PC-3 (cell line): ENCODE measurements at regions of chr13 and their contacts with region 1.

Region 1: DNA sequence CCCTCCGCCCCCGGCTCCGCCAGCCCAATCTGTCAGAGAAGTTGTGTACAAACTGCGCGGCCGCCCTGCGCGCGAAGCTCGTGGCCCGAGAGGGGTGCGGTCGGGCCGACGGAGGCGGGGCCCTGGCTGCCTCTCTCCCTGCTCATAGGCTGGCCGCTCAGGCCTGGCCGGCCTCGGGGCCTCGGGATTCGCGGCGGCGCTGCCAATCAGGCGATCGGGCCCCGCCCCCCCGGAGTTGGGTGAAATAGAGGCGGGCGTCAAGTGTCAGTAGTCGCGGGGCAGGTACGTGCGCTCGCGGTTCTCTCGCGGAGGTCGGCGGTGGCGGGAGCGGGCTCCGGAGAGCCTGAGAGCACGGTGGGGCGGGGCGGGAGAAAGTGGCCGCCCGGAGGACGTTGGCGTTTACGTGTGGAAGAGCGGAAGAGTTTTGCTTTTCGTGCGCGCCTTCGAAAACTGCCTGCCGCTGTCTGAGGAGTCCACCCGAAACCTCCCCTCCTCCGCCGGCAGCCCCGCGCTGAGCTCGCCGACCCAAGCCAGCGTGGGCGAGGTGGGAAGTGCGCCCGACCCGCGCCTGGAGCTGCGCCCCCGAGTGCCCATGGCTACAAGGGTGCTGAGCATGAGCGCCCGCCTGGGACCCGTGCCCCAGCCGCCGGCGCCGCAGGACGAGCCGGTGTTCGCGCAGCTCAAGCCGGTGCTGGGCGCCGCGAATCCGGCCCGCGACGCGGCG is at the start of gene KLF5:
- DNase-seq: peak; percentile 96
- ATAC-seq: peak; percentile 84
- H3K4me3 ChIP-seq: peak within 1 kb of the TSS; percentile 97
- H3K27ac ChIP-seq: peak within 1 kb of the TSS; percentile 79
- H3K4me1 ChIP-seq: peaks cover 47% of the 10 kb centered on the region
- H3K27me3 ChIP-seq: no peaks in the 10 kb centered on the region
- CTCF ChIP-seq: no peak
- total RNA-seq, gene KLF5: 51.4 and 53.7 TPM in 2 replicates

Region 2: DNA sequence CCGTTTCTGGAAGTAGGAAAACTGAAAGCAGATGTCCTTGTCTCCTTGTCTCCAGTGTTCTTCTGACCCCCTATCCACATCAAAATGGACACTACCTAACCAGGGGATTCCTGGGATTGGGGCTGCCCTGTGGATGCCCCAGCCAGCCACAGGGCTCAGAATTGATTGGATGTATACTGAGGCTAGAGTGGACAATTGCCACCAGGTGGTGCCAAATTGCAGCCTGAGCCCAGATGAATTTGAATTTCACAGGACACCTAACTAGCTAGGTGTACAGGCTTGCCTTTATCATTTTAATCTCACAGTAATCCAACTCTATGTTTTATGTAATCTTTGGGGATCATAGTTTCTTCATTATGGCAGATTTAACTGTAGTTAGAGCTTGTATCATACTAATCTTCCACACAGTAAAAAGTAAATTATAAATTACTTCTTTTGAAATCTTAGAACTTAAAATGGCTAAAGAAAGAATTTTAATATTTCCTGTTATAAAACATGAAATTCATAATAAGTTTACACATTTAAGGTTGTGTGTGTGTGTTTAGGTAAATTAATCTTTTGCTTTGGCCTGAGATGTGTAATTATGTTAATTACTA is 219.0 kb before region 1 on chr13:
- CTCF ChIA-PET with region 1: interaction called, 3 read pairs
- POLR2A ChIA-PET with region 1: no interaction called
- intact Hi-C with region 1: loop called (anchors 2 kb)
- DNase-seq: peak; percentile 74
- ATAC-seq: peak; percentile 92
- H3K4me3 ChIP-seq: no peak overlapping the region
- H3K27ac ChIP-seq: no peak overlapping the region
- H3K4me1 ChIP-seq: no peaks in the 10 kb centered on the region
- H3K27me3 ChIP-seq: no peaks in the 10 kb centered on the region
- CTCF ChIP-seq: peak; percentile 84

Region 3: DNA sequence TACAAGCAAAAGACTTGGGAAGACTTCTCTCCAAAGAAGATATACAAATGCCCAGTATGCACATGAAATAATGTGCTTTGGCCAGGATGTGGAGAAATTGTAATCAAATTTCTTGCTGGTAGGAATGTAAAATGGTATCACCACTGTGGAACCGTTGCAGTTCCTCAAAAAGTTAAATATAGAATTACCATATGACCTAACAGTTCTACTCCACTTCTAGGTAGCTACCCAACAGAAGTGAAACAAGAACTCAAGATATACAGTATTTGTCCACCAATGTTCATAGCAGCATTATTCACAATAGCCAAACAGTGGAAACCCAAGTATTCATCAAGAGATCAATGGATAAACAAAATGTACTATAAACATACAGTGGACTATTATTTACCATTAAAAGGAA is 95.1 kb before region 1 on chr13:
- CTCF ChIA-PET with region 1: no interaction called
- POLR2A ChIA-PET with region 1: no interaction called
- intact Hi-C with region 1: loop called (anchors 5 kb)
- DNase-seq: no peak
- ATAC-seq: no peak
- H3K4me3 ChIP-seq: no peak overlapping the region
- H3K27ac ChIP-seq: no peak overlapping the region
- H3K4me1 ChIP-seq: peaks cover 21% of the 10 kb centered on the region
- H3K27me3 ChIP-seq: no peaks in the 10 kb centered on the region
- CTCF ChIP-seq: no peak

Region 4: GRCh38 chr13:72983085-72983768 is 75.7 kb before region 1 on chr13:
- CTCF ChIA-PET with region 1: no interaction called
- POLR2A ChIA-PET with region 1: interaction called, 20 read pairs
- intact Hi-C with region 1: no loop called
- DNase-seq: no peak
- ATAC-seq: no peak
- H3K4me3 ChIP-seq: no peak overlapping the region
- H3K27ac ChIP-seq: no peak overlapping the region
- H3K4me1 ChIP-seq: peaks cover 5% of the 10 kb centered on the region; the same call in 1 of the 2 replicates
- H3K27me3 ChIP-seq: no peaks in the 10 kb centered on the region
- CTCF ChIP-seq: no peak

Region 5: DNA sequence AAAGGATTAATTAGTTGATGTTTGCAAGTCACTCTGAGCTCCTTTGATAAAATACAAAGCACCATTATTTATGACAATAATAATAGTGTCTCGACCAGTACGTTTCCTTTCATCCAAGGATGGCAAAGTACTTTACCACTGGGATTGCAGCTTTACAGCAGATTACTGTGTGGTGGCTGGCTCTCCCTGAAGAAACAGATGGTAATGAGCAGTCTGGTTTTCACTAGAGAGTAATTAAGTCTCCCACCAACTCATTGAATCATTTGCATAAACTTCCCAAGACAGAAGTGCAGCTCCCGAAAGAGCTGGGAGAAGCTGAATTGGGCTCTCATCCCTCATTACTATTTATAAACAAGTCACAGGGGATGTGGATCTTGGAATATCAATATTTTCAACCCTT is 48.6 kb after region 1 on chr13:
- CTCF ChIA-PET with region 1: no interaction called
- POLR2A ChIA-PET with region 1: no interaction called
- intact Hi-C with region 1: no loop called
- DNase-seq: no peak
- ATAC-seq: no peak
- H3K4me3 ChIP-seq: no peak overlapping the region
- H3K27ac ChIP-seq: no peak overlapping the region
- H3K4me1 ChIP-seq: no peaks in the 10 kb centered on the region
- H3K27me3 ChIP-seq: no peaks in the 10 kb centered on the region
- CTCF ChIP-seq: no peak

Region 6: GRCh38 chr13:73133547-73133946 is 74.6 kb after region 1 on chr13:
- CTCF ChIA-PET with region 1: no interaction called
- POLR2A ChIA-PET with region 1: interaction called, 20 read pairs
- intact Hi-C with region 1: loop called (anchors 2 kb)
- DNase-seq: peak; percentile 94
- ATAC-seq: peak; percentile 77
- H3K4me3 ChIP-seq: no peak overlapping the region
- H3K27ac ChIP-seq: peak overlapping the region; percentile 86
- H3K4me1 ChIP-seq: peaks cover 24% of the 10 kb centered on the region
- H3K27me3 ChIP-seq: no peaks in the 10 kb centered on the region
- CTCF ChIP-seq: no peak

Region 7: DNA sequence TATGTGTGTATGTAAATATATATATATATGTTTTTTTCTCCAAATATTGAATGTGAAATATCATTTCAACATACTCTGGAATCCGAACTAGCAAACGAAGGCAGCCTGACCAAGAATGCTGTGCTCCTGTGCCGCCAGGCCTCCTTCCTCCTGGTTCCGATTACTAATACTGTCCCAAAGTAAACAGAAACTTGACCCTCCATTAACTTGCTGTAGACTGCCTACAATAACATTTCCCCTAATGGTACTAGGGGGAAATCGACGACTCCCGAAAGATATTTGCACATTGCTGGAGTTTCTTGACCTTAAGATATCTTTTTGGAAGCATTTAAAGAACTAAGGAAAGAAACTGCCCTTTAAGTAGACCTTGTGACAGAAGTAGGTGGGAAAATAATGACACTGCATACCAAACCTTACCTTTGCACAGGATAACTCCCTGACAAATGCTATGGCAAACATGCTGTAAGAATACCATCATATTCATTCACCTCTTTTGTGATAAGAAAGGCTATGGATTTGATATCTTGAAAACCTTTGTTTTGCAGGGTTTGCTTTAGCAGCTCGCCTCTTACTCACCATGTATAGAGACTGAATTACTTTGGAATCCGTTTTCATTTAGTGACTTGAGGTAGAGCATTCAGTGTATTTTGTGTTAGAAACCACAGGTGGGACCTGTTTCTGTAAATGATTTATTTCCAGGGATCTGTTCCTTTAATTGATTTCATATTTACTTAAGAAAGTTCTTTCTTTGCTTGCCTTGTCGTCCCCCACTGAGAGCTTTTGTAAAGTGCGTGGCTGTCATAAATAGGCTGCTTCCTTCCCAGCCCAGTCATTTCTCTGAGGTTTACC is 80.0 kb after region 1 on chr13:
- CTCF ChIA-PET with region 1: no interaction called
- POLR2A ChIA-PET with region 1: interaction called, 4 read pairs
- intact Hi-C with region 1: loop called (anchors 2 kb)
- DNase-seq: peak; percentile 83
- ATAC-seq: peak; percentile 90
- H3K4me3 ChIP-seq: peak overlapping the region; percentile 47; the same call in 1 of the 2 replicates
- H3K27ac ChIP-seq: peak overlapping the region; percentile 94
- H3K4me1 ChIP-seq: peaks cover 52% of the 10 kb centered on the region
- H3K27me3 ChIP-seq: no peaks in the 10 kb centered on the region
- CTCF ChIP-seq: no peak

Region 8: GRCh38 chr13:73210218-73210883 is 151.5 kb after region 1 on chr13:
- CTCF ChIA-PET with region 1: no interaction called
- POLR2A ChIA-PET with region 1: no interaction called
- intact Hi-C with region 1: no loop called
- DNase-seq: peak; percentile 69
- ATAC-seq: peak; percentile 83
- H3K4me3 ChIP-seq: 0 out of 2 replicates have a peak overlapping the region, but pooled peaks have one; percentile 11
- H3K27ac ChIP-seq: peak overlapping the region; percentile 72
- H3K4me1 ChIP-seq: peaks cover 19% of the 10 kb centered on the region
- H3K27me3 ChIP-seq: no peaks in the 10 kb centered on the region
- CTCF ChIP-seq: no peak